H1 (cell line): ENCODE measurements at regions of chr11 and their contacts with region 1.

Region 1: DNA sequence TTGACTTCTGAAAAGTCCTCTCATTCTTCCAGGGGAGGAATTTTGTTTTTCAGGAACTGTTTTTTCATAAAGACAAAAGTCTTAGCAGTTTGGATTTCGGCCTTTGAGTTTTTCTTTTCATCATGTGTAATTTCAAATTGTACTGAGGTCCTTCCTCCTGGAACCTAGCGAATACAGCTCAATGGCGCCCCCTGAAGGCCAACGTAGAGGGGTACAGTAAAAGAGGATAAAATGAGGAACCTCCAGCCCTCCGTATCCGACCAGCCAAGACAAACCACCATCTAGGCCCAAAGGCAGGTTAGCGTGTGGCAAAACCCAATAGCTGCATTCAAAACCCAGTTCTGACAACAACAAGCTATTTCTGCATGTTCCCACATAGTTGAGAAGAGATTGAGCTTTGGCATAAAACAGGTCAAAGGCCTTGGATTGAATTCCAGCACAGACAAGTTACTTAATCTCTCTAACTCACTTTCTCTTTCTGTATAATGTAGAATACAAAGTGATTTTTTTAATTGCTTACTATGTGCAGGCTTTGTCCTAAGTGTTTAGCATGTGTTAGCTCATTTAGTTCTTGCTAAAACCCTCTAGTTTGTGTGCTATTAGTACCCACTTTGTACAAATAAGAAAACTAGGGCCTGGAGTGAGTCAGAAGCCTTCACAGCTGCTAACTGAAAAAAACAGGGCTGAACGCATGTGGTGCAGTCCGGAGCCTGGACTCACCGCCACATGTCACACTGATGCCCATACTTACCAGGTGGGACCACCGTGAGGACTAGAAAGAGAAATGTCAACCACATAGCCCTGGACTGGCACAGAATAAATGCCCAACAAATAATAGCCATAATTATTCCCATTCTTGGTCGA is 43.2 kb upstream of the ETS1 start:
- DNase-seq: peak; percentile 50 to 89
- H3K4me3 ChIP-seq: no peak overlapping the region
- H3K27ac ChIP-seq: no peak overlapping the region
- H3K4me1 ChIP-seq: peaks cover 0 to 2% (median 1%) of the 10 kb centered on the region in 4 experiments; a peak in 1 of 7 replicates
- H3K27me3 ChIP-seq: no peaks in the 10 kb centered on the region
- CTCF ChIP-seq: peak; percentile 62 to 88 (median 84)
- EP300 ChIP-seq: no peak
- POLR2A ChIP-seq: no peak
- RAD21 ChIP-seq: peak; percentile 94 to 97

Region 2: GRCh38 chr11:128146926-128147605 is 483.5 kb before region 1 on chr11:
- CTCF ChIA-PET with region 1: interaction called, 13 read pairs
- POLR2A ChIA-PET with region 1: no interaction called
- DNase-seq: no peak
- H3K4me3 ChIP-seq: no peak overlapping the region
- H3K27ac ChIP-seq: no peak overlapping the region
- H3K4me1 ChIP-seq: peaks cover 0 to 2% (median 0%) of the 10 kb centered on the region in 4 experiments; a peak in 2 of 7 replicates
- H3K27me3 ChIP-seq: no peaks in the 10 kb centered on the region
- CTCF ChIP-seq: no peak
- EP300 ChIP-seq: no peak
- POLR2A ChIP-seq: no peak
- RAD21 ChIP-seq: no peak

Region 3: GRCh38 chr11:128290106-128290840 is 340.3 kb before region 1 on chr11:
- CTCF ChIA-PET with region 1: interaction called, 133 read pairs
- POLR2A ChIA-PET with region 1: no interaction called
- DNase-seq: peak in 1 of 2 experiments; percentile 60
- H3K4me3 ChIP-seq: no peak overlapping the region
- H3K27ac ChIP-seq: no peak overlapping the region
- H3K4me1 ChIP-seq: no peaks in the 10 kb centered on the region
- H3K27me3 ChIP-seq: no peaks in the 10 kb centered on the region
- CTCF ChIP-seq: peak in 2 of 3 experiments; percentile 72 to 78; a peak in 3 of 4 replicates
- EP300 ChIP-seq: no peak
- POLR2A ChIP-seq: no peak
- RAD21 ChIP-seq: peak; percentile 93 to 94

Region 4: DNA sequence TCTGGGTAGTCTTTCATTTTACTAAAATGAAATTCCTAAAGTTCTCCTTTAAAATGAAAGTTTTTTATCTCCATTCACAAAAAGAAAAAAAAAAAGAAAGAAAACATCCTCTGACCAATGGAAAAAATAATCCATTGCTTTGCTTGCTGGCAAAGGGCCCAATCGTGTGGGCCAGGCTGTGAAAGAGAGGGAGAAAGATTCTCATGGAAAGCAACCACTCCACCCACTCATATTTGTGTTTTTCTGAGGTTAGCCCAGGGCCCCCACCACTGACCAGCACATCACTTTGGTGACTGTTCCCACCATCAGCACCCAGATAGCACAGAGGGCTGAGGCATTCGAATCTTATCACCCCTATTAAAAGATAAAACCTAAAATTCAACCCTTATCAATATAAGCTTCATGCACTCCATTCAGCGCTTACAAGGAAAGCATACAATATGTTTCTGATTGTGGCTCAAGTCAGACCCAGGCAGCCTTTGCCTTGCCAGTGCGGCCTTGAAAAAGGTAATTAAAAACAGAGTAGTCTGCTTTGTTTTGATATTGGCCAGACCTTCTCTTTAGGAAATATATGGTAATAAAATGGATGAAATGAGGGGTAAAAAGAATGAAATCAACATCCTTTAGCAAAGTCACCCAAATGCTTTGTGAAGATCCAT is 236.0 kb before region 1 on chr11:
- CTCF ChIA-PET with region 1: interaction called, 12 read pairs
- POLR2A ChIA-PET with region 1: no interaction called
- DNase-seq: no peak
- H3K4me3 ChIP-seq: no peak overlapping the region
- H3K27ac ChIP-seq: no peak overlapping the region
- H3K4me1 ChIP-seq: no peaks in the 10 kb centered on the region
- H3K27me3 ChIP-seq: no peaks in the 10 kb centered on the region
- CTCF ChIP-seq: no peak
- EP300 ChIP-seq: no peak
- POLR2A ChIP-seq: no peak
- RAD21 ChIP-seq: no peak

Region 5: GRCh38 chr11:128552783-128553661 is 77.6 kb before region 1 on chr11:
- CTCF ChIA-PET with region 1: interaction called, 102 read pairs
- POLR2A ChIA-PET with region 1: no interaction called
- DNase-seq: no peak
- H3K4me3 ChIP-seq: no peak overlapping the region
- H3K27ac ChIP-seq: no peak overlapping the region
- H3K4me1 ChIP-seq: peaks cover 7 to 16% (median 10%) of the 10 kb centered on the region in 4 experiments; a peak in 6 of 7 replicates
- H3K27me3 ChIP-seq: peaks cover 8 to 54% (median 44%) of the 10 kb centered on the region in 4 experiments
- CTCF ChIP-seq: no peak
- EP300 ChIP-seq: no peak
- POLR2A ChIP-seq: no peak
- RAD21 ChIP-seq: no peak

Region 6: DNA sequence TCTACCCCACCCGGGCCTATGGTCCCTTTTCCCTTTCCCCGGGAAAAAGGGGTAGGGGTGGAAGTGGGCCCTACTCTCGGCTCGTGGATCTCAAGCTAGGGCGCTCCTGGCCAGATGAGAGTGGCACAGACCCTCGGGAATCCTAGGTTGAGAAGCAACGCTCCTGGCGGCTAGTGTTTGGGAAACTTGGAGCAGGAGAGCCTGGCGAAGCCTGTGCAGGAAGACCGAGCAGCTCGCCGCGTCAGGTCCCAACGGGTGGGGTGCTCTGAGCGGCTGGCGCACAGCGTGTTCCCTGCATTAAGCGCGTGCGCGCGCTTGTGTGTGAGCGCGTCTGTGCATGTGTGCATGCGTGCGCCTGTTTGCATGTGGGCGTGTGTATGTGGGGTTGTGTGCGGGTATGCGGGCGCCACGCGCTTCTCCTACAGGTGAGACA is 56.2 kb after region 1 on chr11:
- CTCF ChIA-PET with region 1: interaction called, 11 read pairs
- POLR2A ChIA-PET with region 1: no interaction called
- DNase-seq: peak in 1 of 2 experiments; percentile 71
- H3K4me3 ChIP-seq: peak overlapping the region; percentile 20 to 60 (median 42); a peak in 7 of 8 replicates
- H3K27ac ChIP-seq: no peak overlapping the region
- H3K4me1 ChIP-seq: peaks cover 12 to 50% (median 31%) of the 10 kb centered on the region in 4 experiments
- H3K27me3 ChIP-seq: peaks cover 81 to 100% (median 98%) of the 10 kb centered on the region in 4 experiments
- CTCF ChIP-seq: no peak
- EP300 ChIP-seq: no peak
- POLR2A ChIP-seq: no peak
- RAD21 ChIP-seq: no peak

Region 7: GRCh38 chr11:128824191-128825049 is 193.8 kb after region 1 on chr11:
- CTCF ChIA-PET with region 1: interaction called, 36 read pairs
- POLR2A ChIA-PET with region 1: no interaction called
- DNase-seq: peak in 1 of 2 experiments; percentile 53
- H3K4me3 ChIP-seq: peak overlapping the region; percentile 18 to 61 (median 36); a peak in 6 of 8 replicates
- H3K27ac ChIP-seq: no peak overlapping the region
- H3K4me1 ChIP-seq: peaks cover 0 to 9% (median 6%) of the 10 kb centered on the region in 4 experiments; a peak in 4 of 7 replicates
- H3K27me3 ChIP-seq: peaks cover 0 to 9% (median 7%) of the 10 kb centered on the region in 4 experiments; a peak in 4 of 7 replicates
- CTCF ChIP-seq: no peak
- EP300 ChIP-seq: no peak
- POLR2A ChIP-seq: no peak
- RAD21 ChIP-seq: no peak

Region 8: GRCh38 chr11:128963744-128964325 is 333.2 kb after region 1 on chr11:
- CTCF ChIA-PET with region 1: no interaction called
- POLR2A ChIA-PET with region 1: no interaction called
- DNase-seq: no peak
- H3K4me3 ChIP-seq: no peak overlapping the region
- H3K27ac ChIP-seq: no peak overlapping the region
- H3K4me1 ChIP-seq: no peaks in the 10 kb centered on the region
- H3K27me3 ChIP-seq: no peaks in the 10 kb centered on the region; a peak in 1 of 7 replicates
- CTCF ChIP-seq: no peak
- EP300 ChIP-seq: no peak
- POLR2A ChIP-seq: no peak
- RAD21 ChIP-seq: no peak